PC-9 (cell line): ENCODE measurements at regions of chr6 and their contacts with region 1.

Region 1: DNA sequence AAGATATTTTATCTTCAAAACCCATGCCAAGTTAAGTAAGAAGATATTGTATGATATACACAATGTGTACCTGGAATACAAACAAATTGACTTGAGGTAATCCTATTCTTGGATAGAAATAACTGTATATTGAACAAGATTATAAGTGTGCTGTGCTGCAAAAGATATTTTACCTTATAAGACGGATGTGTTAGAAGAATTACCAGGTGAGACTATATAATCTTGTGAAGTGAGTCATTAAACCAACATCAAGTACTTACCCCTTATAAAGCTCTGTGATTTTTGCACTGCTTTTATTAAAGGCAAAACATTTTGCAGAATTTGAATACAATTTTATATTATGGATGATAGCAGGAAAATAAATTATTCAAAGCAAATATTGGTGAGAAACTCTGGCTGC is 570.0 kb downstream of the MMUT start:
- DNase-seq: no peak
- H3K4me3 ChIP-seq: no peak overlapping the region
- H3K27ac ChIP-seq: no peak overlapping the region
- H3K4me1 ChIP-seq: no peaks in the 10 kb centered on the region
- H3K27me3 ChIP-seq: no peaks in the 10 kb centered on the region
- CTCF ChIP-seq: no peak

Region 2: DNA sequence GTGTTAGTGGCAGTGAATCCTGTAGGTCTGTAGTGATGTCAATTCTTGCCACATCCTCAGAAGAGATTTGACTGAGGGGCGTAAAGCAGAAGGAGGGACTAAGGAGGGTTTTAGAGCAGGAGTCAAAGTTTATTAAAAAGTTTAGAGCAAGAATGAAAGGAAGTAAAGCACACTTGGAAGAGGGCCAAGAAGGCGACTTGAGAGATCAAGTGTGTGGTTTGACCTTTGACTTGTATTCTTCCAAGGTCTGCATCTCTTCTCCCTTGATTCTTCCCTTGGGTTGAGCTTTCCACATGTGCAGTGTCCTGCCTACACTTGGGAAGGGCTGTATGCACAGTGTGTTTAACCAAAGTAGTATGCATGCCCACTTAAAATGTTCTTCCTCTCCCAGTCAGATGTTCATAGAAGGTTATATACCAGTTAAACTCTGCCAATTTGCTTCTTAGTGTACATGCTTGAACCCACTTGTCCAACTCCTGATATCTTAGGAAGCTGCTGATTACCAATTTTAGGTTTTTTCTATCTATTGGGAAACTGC is 57.6 kb before region 1 on chr6:
- CTCF ChIA-PET with region 1: no interaction called
- POLR2A ChIA-PET with region 1: interaction called, 12 read pairs
- intact Hi-C with region 1: no loop called
- DNase-seq: peak in 1 of 2 experiments; percentile 13
- H3K4me3 ChIP-seq: no peak overlapping the region
- H3K27ac ChIP-seq: no peak overlapping the region
- H3K4me1 ChIP-seq: peaks cover 7% of the 10 kb centered on the region; the same call in 1 of the 2 replicates
- H3K27me3 ChIP-seq: no peaks in the 10 kb centered on the region
- CTCF ChIP-seq: no peak